ENCODE measurements at regions of chr17 and their contacts with region 1.

Region 1: DNA sequence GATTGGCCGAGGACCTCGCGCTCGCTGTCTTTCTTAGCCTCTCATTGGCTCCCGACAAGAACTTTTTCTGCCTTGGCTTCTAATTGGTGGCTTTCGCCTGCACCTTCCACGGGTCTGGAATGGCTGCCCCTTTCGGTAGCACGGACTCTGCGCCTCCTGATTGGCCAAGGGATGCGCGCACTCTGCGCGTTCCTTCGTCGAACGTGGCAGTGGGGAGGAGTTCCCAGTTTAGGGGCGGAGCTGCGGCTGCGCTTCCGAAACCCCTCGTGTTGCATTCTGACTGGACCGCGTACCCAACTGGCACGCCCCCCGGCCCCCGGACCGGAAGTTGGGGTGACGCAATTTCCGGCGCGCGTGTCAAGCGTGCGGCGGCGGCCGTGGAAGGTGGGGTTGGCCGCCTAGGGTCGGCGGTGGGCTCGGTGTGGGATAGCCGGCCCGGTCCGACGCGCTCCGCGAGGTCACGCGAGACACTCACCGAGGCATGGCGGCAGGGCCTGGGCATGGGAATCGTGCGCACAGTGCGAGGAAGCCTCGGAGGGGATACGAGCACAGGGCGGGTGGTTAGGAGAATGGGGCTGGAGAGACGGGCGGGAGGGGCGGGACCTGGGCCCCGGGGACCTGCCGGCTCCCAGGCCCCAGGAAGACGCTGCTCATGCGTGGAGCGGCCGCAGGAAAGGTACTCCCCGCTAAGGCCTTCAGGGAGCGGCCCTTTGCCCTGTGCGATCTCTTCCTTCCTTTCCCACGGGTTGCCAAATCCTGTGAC is 602 bp upstream of the P4HB start:
- DNase-seq: peak; percentile 100
- H3K4me3 ChIP-seq: peak overlapping the region; percentile 34 to 73 (median 47)
- H3K4me3 Mint-ChIP-seq: peak overlapping the region; percentile 82 to 89
- H3K27ac ChIP-seq: peak overlapping the region; percentile 96 to 99
- H3K27ac Mint-ChIP-seq: peak overlapping the region; percentile 95 to 98 (median 97)
- H3K4me1 ChIP-seq: peaks cover 37 to 44% of the 10 kb centered on the region in 2 donors
- H3K4me1 Mint-ChIP-seq: peaks cover 42% of the 10 kb centered on the region
- H3K27me3 ChIP-seq: no peaks in the 10 kb centered on the region
- H3K27me3 Mint-ChIP-seq: peaks cover 0 to 3% (median 2%) of the 10 kb centered on the region in 3 donors
- CTCF ChIP-seq: no peak

Region 2: DNA sequence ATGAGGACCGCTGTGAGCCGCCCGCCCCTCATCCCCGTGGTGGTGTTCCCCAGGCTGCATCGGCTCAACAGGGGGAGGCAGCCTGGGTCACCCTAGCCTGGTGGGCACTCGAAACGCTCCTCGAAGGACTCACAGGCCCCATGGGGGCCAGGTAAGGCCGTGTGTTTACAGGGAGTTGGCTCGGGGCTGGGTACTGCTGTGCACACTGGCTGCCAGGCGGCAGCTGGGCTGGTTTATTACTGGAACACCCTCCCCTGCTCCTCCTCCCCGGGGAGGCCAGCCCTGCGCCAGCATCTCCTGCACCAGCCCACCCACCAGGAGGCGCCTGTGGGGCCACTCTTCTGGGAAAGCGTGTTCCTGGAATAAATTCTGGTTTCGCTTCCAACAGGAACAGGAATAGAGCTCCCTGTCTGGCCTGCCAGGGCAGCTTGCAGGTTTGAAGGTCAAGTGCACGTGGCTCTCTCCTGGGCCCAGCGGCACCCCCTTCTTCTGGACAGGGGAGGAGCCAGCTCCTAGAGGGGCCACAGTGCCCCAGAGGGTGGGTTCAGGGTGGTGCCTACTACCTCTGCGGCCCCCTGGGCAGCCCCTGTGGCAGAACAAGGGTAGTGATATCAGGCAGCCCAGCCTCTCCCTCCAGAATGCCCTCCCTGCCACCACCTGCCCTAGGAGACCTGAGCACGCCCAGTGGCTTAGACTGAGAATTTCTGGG is 39.2 kb before region 1 on chr17:
- intact Hi-C with region 1: loop called in 1 of 2 experiments (anchors 5 kb)
- DNase-seq: peak in 2 of 3 donors; percentile 33 to 46
- H3K4me3 ChIP-seq: no peak overlapping the region
- H3K4me3 Mint-ChIP-seq: no peak overlapping the region
- H3K27ac ChIP-seq: no peak overlapping the region
- H3K27ac Mint-ChIP-seq: no peak overlapping the region
- H3K4me1 ChIP-seq: peaks cover 4 to 10% of the 10 kb centered on the region in 2 donors
- H3K4me1 Mint-ChIP-seq: peaks cover 8% of the 10 kb centered on the region
- H3K27me3 ChIP-seq: peaks cover 0 to 4% of the 10 kb centered on the region in 2 donors
- H3K27me3 Mint-ChIP-seq: peaks cover 0 to 13% (median 8%) of the 10 kb centered on the region in 3 donors
- CTCF ChIP-seq: peak; percentile 41

Region 3: DNA sequence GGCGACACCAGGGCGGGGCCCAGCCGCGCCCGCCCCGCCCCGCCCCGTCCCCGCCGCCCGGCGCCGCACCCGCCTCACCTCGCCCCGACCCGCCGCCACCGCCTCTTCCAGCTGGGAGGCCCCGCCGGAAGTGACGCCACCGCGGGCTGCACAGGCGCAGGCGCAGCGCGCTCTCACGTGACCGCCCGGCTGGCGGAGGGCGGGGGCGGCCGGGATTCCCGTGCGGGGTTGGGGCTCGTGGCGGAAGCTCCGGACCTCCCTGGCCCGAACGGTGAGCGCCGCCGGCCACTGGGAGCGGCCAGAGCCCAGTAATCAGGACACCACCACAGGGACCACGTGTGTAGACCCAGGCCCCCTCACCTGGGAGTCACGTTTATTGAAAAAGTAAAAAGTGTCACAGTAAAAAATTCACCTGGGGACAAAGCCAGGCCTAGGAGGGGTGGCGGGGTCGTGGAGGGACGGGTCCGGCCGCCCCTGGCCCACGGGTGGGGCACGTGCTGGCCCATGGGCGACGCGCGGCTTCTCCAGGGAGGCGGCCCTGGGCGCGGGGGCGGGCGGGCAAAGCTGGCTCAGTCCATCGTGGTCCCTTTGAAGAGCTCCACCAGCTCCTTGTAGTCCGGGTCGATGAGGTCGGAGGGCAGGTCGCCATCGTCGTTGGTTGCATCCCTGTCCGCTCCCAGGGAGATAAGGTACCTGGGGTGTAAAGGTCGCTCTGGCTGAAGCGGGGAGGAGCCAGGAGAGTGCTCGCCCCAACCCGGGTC is 27.6 kb before region 1 on chr17 and contains the start of gene MCRIP1:
- intact Hi-C with region 1: loop called in 1 of 2 experiments (anchors 2 kb)
- DNase-seq: peak; percentile 94 to 97 (median 95)
- H3K4me3 ChIP-seq: peak within 1 kb of the TSS; percentile 76 to 84 (median 83)
- H3K4me3 Mint-ChIP-seq: peak within 1 kb of the TSS; percentile 90 to 92
- H3K27ac ChIP-seq: peak within 1 kb of the TSS; percentile 88 to 96
- H3K27ac Mint-ChIP-seq: peak within 1 kb of the TSS; percentile 91 to 99 (median 96)
- H3K4me1 ChIP-seq: peaks cover 55 to 67% of the 10 kb centered on the region in 2 donors
- H3K4me1 Mint-ChIP-seq: peaks cover 52% of the 10 kb centered on the region
- H3K27me3 ChIP-seq: no peaks in the 10 kb centered on the region
- H3K27me3 Mint-ChIP-seq: peaks cover 0 to 1% (median 0%) of the 10 kb centered on the region in 3 donors
- CTCF ChIP-seq: no peak
- polyA plus RNA-seq, gene MCRIP1: 48.4 to 63.0 (median 48.5) TPM

Region 4: DNA sequence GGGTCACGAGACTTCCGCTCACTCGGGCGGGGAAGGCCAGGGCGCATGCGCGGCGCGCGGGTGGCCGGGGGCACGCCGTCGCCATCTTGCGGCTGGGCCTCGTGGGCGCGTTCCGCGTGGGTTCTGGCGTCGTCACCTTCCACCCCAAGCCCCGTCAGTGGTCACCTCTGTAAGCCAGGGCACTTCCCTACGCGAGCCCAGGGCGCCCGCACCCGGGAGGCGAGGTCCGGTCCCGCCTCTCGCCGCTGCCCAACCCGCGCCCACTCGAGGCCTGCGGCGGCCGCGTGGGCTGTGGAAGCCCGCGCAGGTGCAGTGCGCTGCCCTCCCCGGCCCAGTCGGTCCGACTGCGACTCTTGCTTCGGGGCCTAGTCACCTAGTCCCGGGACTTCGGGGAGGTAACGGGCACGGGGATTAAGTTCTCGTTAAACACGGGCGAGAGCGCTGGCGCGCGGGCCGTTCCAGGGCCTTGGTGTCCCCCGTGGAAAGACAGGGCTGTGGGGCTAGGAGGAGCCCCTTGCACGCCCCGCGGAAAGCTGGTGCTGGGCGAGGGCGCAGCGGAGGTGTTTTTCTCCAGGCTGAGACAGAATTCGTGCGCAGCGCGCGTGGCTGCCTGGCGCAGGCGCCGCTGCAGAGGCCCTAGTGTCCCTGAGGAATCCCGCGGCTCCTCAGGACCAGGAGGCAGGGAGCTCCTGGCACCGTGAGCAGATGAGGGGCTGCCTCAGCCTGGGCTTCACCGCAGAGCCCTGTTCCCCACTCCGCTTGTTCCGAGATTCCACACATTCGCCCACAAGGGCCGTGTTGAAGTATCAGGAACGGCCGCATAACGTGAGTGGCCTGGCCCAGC is 10.7 kb after region 1 on chr17:
- intact Hi-C with region 1: loop called in 1 of 2 experiments (anchors 1 kb)
- DNase-seq: peak; percentile 90 to 95 (median 93)
- H3K4me3 ChIP-seq: peak overlapping the region; percentile 59 to 89 (median 62)
- H3K4me3 Mint-ChIP-seq: peak overlapping the region; percentile 79 to 89
- H3K27ac ChIP-seq: peak overlapping the region; percentile 77 to 99
- H3K27ac Mint-ChIP-seq: peak overlapping the region; percentile 87 to 93 (median 89)
- H3K4me1 ChIP-seq: peaks cover 34 to 53% of the 10 kb centered on the region in 2 donors
- H3K4me1 Mint-ChIP-seq: peaks cover 31% of the 10 kb centered on the region
- H3K27me3 ChIP-seq: no peaks in the 10 kb centered on the region
- H3K27me3 Mint-ChIP-seq: no peaks in the 10 kb centered on the region
- CTCF ChIP-seq: peak; percentile 38

Region 5: DNA sequence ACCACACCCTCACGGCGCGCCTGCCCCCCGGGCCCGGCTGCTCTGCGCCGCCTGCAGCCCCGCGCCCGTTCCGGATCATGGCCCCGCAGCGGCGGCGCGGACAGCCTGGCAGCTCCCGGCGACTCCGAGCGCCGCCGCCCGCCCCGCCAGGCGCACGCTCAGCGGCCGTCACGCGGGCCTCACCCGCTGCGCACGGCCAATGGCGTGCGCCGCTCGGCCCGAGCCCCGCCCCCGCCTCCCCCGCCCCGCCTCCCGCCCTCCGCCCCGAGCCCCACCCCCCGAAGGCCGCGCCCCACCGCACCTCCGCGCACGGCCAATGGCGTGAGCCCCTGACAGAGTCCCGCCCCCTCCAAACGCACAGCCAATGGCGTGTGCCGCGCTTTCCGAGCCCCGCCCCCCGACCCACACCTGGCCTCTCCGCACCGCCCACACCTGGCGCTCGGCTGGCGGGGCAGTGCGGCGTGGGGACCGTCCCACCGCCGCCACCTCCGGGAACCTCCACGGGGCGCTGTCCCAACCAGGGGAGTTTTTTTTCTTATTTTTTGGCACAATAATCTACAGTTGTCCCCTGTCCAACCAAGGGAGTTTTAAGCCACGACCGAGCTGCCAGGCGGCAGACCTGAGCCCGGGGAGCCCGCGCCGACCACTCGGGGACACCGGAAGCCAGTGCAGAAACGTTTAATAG is 50.5 kb after region 1 on chr17 and contains the start of gene PCYT2:
- intact Hi-C with region 1: loop called in 1 of 2 experiments (anchors 10 kb)
- DNase-seq: peak; percentile 75 to 88 (median 81)
- H3K4me3 ChIP-seq: peak within 1 kb of the TSS; percentile 56 to 81 (median 59)
- H3K4me3 Mint-ChIP-seq: peak within 1 kb of the TSS; percentile 87 to 94
- H3K27ac ChIP-seq: no peak within 1 kb of the TSS
- H3K27ac Mint-ChIP-seq: peak within 1 kb of the TSS in 4 of 7 donors; percentile 15 to 75 (median 62)
- H3K4me1 ChIP-seq: peaks cover 23 to 29% of the 10 kb centered on the region in 2 donors
- H3K4me1 Mint-ChIP-seq: peaks cover 31% of the 10 kb centered on the region
- H3K27me3 ChIP-seq: no peaks in the 10 kb centered on the region
- H3K27me3 Mint-ChIP-seq: no peaks in the 10 kb centered on the region
- CTCF ChIP-seq: no peak
- polyA plus RNA-seq, gene PCYT2: 10.7 to 14.5 (median 11.0) TPM

Measured in CD14-positive monocyte (primary cell).